ENCODE measurements at regions of chr2 and their contacts with region 1.

Region 1: DNA sequence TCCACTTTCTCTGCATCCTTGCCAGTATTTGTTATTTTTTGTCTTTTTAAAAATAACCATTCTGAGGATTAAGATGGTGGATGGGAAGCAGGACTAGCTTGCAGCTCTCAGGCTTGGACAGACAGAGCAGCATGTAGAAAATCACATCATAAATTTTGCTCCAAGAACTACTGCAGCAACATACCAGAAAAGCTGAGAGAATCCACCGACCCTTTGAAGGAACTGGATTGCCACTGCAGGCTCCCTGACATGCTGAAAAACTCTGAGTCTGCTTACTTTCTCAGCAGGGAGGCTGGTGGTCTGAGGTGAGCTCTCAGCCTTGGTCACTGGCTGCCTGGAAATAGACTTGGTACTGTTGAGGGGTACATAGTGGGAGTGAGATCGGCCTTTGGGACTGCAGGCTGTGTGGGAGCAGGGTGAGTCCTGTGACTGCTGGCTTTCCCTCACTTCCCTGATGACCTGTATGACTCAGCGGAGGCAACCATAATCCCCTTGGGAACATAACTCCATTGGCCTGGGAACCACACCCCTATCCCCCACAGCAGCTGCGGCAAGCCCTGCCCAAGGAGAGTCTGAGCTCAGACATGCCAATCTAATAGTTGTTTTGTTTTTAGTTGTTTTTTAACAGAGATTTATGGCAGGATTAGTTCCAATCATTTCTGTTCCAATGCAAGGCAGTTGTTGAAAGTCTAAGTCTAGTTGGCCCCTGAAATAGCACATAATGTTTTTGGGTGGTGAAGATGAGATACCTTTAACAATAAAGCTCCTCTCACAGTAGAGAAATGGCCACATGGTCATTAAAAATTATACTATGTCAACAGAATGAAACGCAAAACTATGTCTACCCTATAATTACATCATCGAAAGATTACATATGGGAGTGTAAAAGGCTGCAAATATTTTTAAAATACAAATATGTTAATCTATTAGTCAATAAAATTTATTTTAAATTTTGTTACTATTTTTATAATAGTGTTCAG is 414.2 kb upstream of the CHAC2 start:
- DNase-seq: peak; percentile 86 to 91
- H3K4me3 ChIP-seq: no peak overlapping the region
- H3K27ac ChIP-seq: peak overlapping the region; percentile 79
- H3K4me1 ChIP-seq: peaks cover 15% of the 10 kb centered on the region
- H3K27me3 ChIP-seq: no peaks in the 10 kb centered on the region
- CTCF ChIP-seq: no peak

Region 2: DNA sequence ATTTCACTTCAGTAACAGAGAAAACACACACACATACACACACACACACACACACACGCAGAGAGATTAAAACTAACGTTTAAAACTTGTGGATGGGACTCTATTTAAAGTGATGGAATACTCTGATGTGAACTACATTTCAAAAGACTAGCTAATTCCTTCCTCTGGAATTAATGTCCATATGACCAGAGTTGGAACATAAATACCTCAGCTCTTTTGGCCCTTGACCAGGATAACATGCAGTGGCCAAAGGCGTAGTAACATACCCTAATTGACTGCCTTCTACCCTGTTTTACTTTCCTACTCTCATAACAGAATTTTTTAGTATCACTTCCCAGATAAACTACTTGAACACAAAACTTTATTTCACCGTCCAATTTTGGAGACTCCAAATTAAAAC is 257.1 kb before region 1 on chr2:
- CTCF ChIA-PET with region 1: no interaction called
- POLR2A ChIA-PET with region 1: no interaction called
- intact Hi-C with region 1: no loop called
- DNase-seq: no peak
- H3K4me3 ChIP-seq: no peak overlapping the region
- H3K27ac ChIP-seq: no peak overlapping the region
- H3K4me1 ChIP-seq: no peaks in the 10 kb centered on the region
- H3K27me3 ChIP-seq: no peaks in the 10 kb centered on the region
- CTCF ChIP-seq: no peak

Region 3: DNA sequence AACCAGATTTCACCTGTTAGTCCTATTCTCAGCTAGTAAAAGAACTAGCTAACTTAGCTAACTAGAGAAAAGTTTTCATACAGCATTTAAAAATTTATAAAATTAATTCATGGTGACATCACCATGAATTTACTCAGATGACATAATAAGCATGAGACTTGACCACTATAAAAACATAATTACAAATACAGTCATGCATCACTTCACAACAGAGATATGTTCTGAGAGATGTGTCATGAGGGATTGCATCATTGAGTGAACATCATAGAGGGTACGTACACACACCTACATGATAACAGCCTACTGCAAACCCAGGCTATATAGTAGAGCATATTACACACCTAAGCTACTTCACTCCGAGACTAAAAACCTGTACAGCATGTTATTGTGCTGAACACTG is 67.1 kb before region 1 on chr2:
- CTCF ChIA-PET with region 1: interaction called, 3 read pairs
- POLR2A ChIA-PET with region 1: no interaction called
- intact Hi-C with region 1: loop called (anchors 1 kb)
- DNase-seq: no peak
- H3K4me3 ChIP-seq: no peak overlapping the region
- H3K27ac ChIP-seq: no peak overlapping the region
- H3K4me1 ChIP-seq: peaks cover 17% of the 10 kb centered on the region; the same call in 1 of the 2 replicates
- H3K27me3 ChIP-seq: no peaks in the 10 kb centered on the region
- CTCF ChIP-seq: no peak

Region 4: DNA sequence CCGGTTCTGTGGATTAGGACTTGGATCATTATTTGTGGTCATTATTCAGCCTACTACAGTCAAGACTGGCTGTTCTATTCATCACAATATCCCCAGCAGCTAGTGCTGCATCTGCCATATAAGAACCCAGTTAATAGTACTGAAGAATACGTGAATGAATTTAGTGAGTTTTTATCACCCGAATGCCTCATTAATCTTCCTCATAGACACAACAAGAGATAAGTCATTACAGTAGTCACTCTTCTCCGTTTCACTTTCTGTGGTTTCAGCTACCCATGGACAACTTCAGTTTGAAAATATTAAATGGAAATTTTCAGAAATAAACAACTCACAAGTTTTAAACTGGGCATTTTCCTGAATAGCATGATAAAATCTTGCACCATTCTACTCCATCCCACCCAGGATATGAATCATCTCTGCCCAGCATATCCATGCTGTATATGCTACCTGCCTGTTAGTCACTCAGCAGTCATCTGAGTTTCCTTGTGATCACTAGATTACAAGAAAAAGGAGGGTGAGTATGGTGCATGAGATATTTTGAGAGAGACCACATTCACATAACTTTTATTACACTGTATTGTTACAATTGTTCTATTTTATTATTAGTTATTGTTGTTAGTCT is 50.5 kb after region 1 on chr2:
- CTCF ChIA-PET with region 1: no interaction called
- POLR2A ChIA-PET with region 1: no interaction called
- intact Hi-C with region 1: loop called (anchors 5 kb)
- DNase-seq: peak; percentile 25 to 83
- H3K4me3 ChIP-seq: no peak overlapping the region
- H3K27ac ChIP-seq: peak overlapping the region; percentile 92
- H3K4me1 ChIP-seq: peaks cover 29% of the 10 kb centered on the region
- H3K27me3 ChIP-seq: no peaks in the 10 kb centered on the region
- CTCF ChIP-seq: no peak

Region 5: GRCh38 chr2:53568469-53568868 is 215.0 kb after region 1 on chr2:
- CTCF ChIA-PET with region 1: interaction called, 12 read pairs
- POLR2A ChIA-PET with region 1: no interaction called
- intact Hi-C with region 1: no loop called
- DNase-seq: no peak
- H3K4me3 ChIP-seq: no peak overlapping the region
- H3K27ac ChIP-seq: no peak overlapping the region
- H3K4me1 ChIP-seq: no peaks in the 10 kb centered on the region
- H3K27me3 ChIP-seq: no peaks in the 10 kb centered on the region
- CTCF ChIP-seq: no peak

Region 6: GRCh38 chr2:53751728-53752127 is 398.3 kb after region 1 on chr2:
- CTCF ChIA-PET with region 1: no interaction called
- POLR2A ChIA-PET with region 1: no interaction called
- intact Hi-C with region 1: no loop called
- DNase-seq: no peak
- H3K4me3 ChIP-seq: no peak overlapping the region
- H3K27ac ChIP-seq: no peak overlapping the region
- H3K4me1 ChIP-seq: no peaks in the 10 kb centered on the region; the same call in 1 of the 2 replicates
- H3K27me3 ChIP-seq: no peaks in the 10 kb centered on the region
- CTCF ChIP-seq: no peak

Measured in PC-9 (cell line).